Activated B cell treated with CpG ODN at 0.5 μM for 24 hours (primary cell): ENCODE measurements at regions of chr19 and their contacts with region 1.

Region 1: GRCh38 chr19:9565900-9566705 is 18.2 kb downstream of the ZNF121 start:
- DNase-seq: no peak
- ATAC-seq: no peak
- H3K4me3 Mint-ChIP-seq: no peak overlapping the region
- H3K27ac Mint-ChIP-seq: no peak overlapping the region
- H3K4me1 Mint-ChIP-seq: no peaks in the 10 kb centered on the region
- H3K27me3 Mint-ChIP-seq: no peaks in the 10 kb centered on the region
- CTCF ChIP-seq: no peak

Region 2: GRCh38 chr19:9413240-9413954 is 152.7 kb before region 1 on chr19:
- CTCF ChIA-PET with region 1: no interaction called
- POLR2A ChIA-PET with region 1: interaction called, 16 read pairs
- intact Hi-C with region 1: no loop called
- DNase-seq: no peak
- ATAC-seq: no peak
- H3K4me3 Mint-ChIP-seq: no peak overlapping the region
- H3K27ac Mint-ChIP-seq: no peak overlapping the region
- H3K4me1 Mint-ChIP-seq: no peaks in the 10 kb centered on the region
- H3K27me3 Mint-ChIP-seq: no peaks in the 10 kb centered on the region
- CTCF ChIP-seq: no peak